K562 (cell line): ENCODE measurements at regions of chr1 and their contacts with region 1.

Region 1: GRCh38 chr1:221741711-221742554 is at the start of gene DUSP10:
- DNase-seq: peak; percentile 98 to 100 (median 99)
- ATAC-seq: peak; percentile 89
- H3K4me3 ChIP-seq: peak within 1 kb of the TSS; percentile 74
- H3K27ac ChIP-seq: peak within 1 kb of the TSS; percentile 93
- H3K4me1 ChIP-seq: peaks cover 18 to 19% of the 10 kb centered on the region in 2 experiments
- H3K27me3 ChIP-seq: no peaks in the 10 kb centered on the region
- CTCF ChIP-seq: peak in 1 of 3 experiments; percentile 7; a peak in 1 of 6 replicates
- EP300 ChIP-seq: peak; percentile 25; the same call in 1 of the 2 replicates
- POLR2A ChIP-seq: peak; percentile 80
- RAD21 ChIP-seq: peak; percentile 46 to 47
- polyA plus RNA-seq, gene DUSP10: 3.8 to 5.5 TPM

Region 2: DNA sequence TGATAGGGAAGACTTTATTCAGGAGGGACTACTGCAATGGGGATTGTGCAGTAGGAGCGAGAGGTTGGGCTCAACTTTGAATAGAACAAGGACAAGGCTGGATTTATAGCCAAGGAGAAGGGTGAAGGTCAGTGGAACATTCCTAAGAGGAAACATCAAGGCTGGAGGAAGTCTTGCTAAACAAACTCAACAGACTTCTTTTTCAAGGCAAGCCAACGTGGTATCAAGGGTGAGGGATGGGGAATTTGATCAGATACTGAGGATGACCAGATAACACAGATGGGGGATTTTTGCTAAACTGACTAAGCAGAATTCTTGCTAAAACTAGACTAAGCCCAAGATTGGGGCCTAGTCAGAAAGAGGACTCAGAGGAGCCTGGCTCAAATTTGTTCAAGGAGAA is 107.3 kb before region 1 on chr1:
- CTCF ChIA-PET with region 1: no interaction called
- POLR2A ChIA-PET with region 1: interaction called, 3 read pairs
- in situ Hi-C with region 1: no loop called
- intact Hi-C with region 1: loop called (anchors 5 kb)
- DNase-seq: no peak
- ATAC-seq: no peak
- H3K4me3 ChIP-seq: no peak overlapping the region
- H3K27ac ChIP-seq: no peak overlapping the region
- H3K4me1 ChIP-seq: peaks cover 0 to 20% of the 10 kb centered on the region in 2 experiments; a peak in 4 of 5 replicates
- H3K27me3 ChIP-seq: no peaks in the 10 kb centered on the region
- CTCF ChIP-seq: no peak
- EP300 ChIP-seq: no peak
- POLR2A ChIP-seq: no peak
- RAD21 ChIP-seq: no peak

Region 3: DNA sequence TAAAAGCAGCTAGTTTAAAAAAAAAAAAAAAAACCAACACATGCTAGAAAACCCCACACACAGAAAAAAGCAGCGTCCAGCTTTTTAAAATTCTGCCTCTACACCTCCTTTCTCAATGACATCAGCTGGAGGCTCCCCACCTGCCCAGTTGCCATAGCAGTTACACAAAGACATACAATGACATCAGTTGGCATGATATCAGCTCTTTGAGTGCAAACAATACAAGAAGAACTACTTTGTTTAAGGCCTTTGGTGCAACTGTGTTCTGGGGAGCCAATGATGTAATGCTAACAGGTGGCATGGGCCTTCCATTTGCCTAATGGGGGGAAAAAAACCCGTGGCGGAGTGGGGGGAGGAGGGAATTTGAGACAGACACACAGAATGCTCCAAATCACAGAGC is 32.9 kb before region 1 on chr1:
- CTCF ChIA-PET with region 1: no interaction called
- POLR2A ChIA-PET with region 1: interaction called, 17 read pairs
- in situ Hi-C with region 1: no loop called
- intact Hi-C with region 1: loop called (anchors 2 kb)
- DNase-seq: no peak
- ATAC-seq: no peak
- H3K4me3 ChIP-seq: no peak overlapping the region
- H3K27ac ChIP-seq: peak overlapping the region; percentile 86; the same call in 2 of the 3 replicates
- H3K4me1 ChIP-seq: peaks cover 10 to 68% of the 10 kb centered on the region in 2 experiments
- H3K27me3 ChIP-seq: no peaks in the 10 kb centered on the region
- CTCF ChIP-seq: no peak
- EP300 ChIP-seq: no peak
- POLR2A ChIP-seq: no peak
- RAD21 ChIP-seq: no peak

Region 4: GRCh38 chr1:221727146-221728036 is 14.5 kb before region 1 on chr1:
- CTCF ChIA-PET with region 1: no interaction called
- POLR2A ChIA-PET with region 1: interaction called, 15 read pairs
- in situ Hi-C with region 1: no loop called
- intact Hi-C with region 1: loop called (anchors 2 kb)
- DNase-seq: no peak
- ATAC-seq: no peak
- H3K4me3 ChIP-seq: no peak overlapping the region
- H3K27ac ChIP-seq: no peak overlapping the region
- H3K4me1 ChIP-seq: peaks cover 0 to 36% of the 10 kb centered on the region in 2 experiments; a peak in 4 of 5 replicates
- H3K27me3 ChIP-seq: no peaks in the 10 kb centered on the region
- CTCF ChIP-seq: no peak
- EP300 ChIP-seq: no peak
- POLR2A ChIP-seq: no peak
- RAD21 ChIP-seq: no peak; a peak in 1 of 4 replicates

Region 5: GRCh38 chr1:221858818-221859611 is 117.1 kb after region 1 on chr1:
- CTCF ChIA-PET with region 1: no interaction called
- POLR2A ChIA-PET with region 1: no interaction called
- in situ Hi-C with region 1: no loop called
- intact Hi-C with region 1: loop called (anchors 5 kb)
- DNase-seq: no peak
- ATAC-seq: no peak
- H3K4me3 ChIP-seq: no peak overlapping the region
- H3K27ac ChIP-seq: no peak overlapping the region
- H3K4me1 ChIP-seq: no peaks in the 10 kb centered on the region
- H3K27me3 ChIP-seq: peaks cover 0 to 6% of the 10 kb centered on the region in 2 experiments; a peak in 1 of 5 replicates
- CTCF ChIP-seq: no peak
- EP300 ChIP-seq: no peak
- POLR2A ChIP-seq: no peak
- RAD21 ChIP-seq: no peak

Region 6: DNA sequence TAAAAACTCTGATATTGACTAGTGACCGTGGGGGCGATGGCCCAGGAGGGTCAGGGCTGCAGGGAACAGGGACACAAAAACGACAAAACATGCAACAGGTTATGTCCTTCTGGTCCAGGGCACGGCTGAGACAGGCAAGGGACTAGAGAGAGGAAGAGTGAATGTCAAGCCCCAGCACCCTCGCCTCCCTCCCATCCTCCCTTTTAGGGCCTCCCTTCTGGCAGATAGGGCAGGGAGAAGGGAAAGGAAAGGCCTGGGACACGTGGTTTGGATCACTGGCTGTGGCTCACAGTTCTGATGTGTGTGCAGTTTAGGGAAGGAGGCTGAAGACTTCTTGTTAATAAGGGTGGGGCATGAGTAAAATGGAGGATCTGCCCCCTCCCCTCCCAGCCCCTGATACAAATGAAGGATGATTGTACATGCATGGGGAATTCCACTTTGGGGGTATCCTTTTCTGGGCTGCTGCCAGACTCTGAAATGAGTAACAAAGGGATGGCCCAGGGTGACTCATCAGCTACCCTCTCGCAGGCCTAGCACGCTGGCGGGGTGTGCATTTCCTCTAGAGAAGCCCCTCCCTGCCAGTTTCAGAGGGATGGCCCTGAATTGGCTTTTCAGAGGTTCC is 1984.6 kb after region 1 on chr1:
- CTCF ChIA-PET with region 1: no interaction called
- POLR2A ChIA-PET with region 1: no interaction called
- in situ Hi-C with region 1: no loop called
- intact Hi-C with region 1: loop called (anchors 5 kb)
- DNase-seq: peak; percentile 88 to 92 (median 90)
- ATAC-seq: peak; percentile 90
- H3K4me3 ChIP-seq: no peak overlapping the region
- H3K27ac ChIP-seq: peak overlapping the region; percentile 81
- H3K4me1 ChIP-seq: peaks cover 19 to 29% of the 10 kb centered on the region in 2 experiments
- H3K27me3 ChIP-seq: no peaks in the 10 kb centered on the region
- CTCF ChIP-seq: no peak
- EP300 ChIP-seq: no peak
- POLR2A ChIP-seq: no peak; the same call in 1 of the 2 replicates
- RAD21 ChIP-seq: peak in 1 of 2 experiments; percentile 24; a peak in 1 of 4 replicates